Dendritic cell treated with granulocyte-macrophage colony-stimulating factor and Interleukin-4, amounts not matched to agents 40 ng/mL and 50 ng/mL, for 4 days (primary cell): ENCODE measurements at regions of chr14 and their contacts with region 1.

Region 1: DNA sequence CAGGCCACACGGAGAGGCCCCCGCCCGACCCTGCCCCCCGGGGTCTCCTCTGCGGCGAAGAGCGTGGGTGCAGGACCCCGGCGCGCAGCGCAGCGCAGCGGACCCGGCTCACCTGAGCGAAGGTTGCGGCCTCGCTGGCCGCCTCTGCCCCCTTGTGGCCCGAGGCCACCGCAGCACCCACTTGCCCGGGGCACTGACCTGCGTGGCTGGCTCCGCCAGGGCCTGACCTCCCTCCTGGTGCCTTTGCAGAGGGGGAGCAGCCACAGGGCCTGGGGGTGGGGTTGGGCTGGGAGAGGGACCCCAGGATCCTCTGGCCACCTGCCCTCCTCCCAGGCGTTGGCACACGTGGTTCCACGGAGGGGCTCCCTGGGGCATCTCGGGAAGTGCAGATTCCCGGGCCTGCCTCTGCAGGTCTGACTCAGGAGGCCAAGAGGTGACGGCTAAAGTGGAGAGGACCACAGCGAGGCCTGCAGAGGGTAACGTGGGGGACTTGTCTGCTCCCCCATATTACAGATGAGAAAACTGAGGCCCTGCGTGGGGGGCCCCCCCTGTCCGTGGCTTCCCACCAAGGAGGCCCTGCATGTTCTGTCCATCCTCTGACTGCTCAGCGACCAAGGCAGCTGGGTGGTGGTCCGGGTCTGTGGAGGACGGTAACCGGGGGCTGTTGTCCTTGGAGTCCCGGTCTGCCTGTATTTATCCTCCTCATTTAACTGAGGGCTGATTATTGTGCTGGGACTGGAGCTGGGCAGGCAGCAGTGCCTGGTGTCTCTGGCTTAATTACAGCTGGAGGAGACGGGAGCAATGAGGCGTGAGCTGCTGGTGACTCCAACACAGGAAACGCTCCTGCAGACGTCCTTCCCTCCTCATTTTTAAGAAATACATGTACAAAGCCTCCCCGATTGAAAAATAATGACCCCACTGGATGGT is 67.9 kb upstream of the BEGAIN start:
- H3K4me3 Mint-ChIP-seq: no peak overlapping the region
- H3K27ac Mint-ChIP-seq: no peak overlapping the region
- H3K4me1 Mint-ChIP-seq: no peaks in the 10 kb centered on the region
- H3K27me3 Mint-ChIP-seq: peaks cover 32% of the 10 kb centered on the region

Region 2: GRCh38 chr14:100285021-100285912 is 369.8 kb before region 1 on chr14:
- intact Hi-C with region 1: loop called (anchors 10 kb)
- H3K4me3 Mint-ChIP-seq: peak overlapping the region; percentile 77
- H3K27ac Mint-ChIP-seq: peak overlapping the region; percentile 77
- H3K4me1 Mint-ChIP-seq: peaks cover 21% of the 10 kb centered on the region
- H3K27me3 Mint-ChIP-seq: peaks cover 5% of the 10 kb centered on the region

Region 3: GRCh38 chr14:100383727-100384158 is 271.3 kb before region 1 on chr14:
- intact Hi-C with region 1: loop called (anchors 2 kb)
- H3K4me3 Mint-ChIP-seq: no peak overlapping the region
- H3K27ac Mint-ChIP-seq: peak overlapping the region; percentile 62
- H3K4me1 Mint-ChIP-seq: peaks cover 14% of the 10 kb centered on the region
- H3K27me3 Mint-ChIP-seq: no peaks in the 10 kb centered on the region

Region 4: GRCh38 chr14:100440187-100440631 is 214.9 kb before region 1 on chr14:
- intact Hi-C with region 1: loop called (anchors 2 kb)
- H3K4me3 Mint-ChIP-seq: no peak overlapping the region
- H3K27ac Mint-ChIP-seq: no peak overlapping the region
- H3K4me1 Mint-ChIP-seq: peaks cover 23% of the 10 kb centered on the region
- H3K27me3 Mint-ChIP-seq: no peaks in the 10 kb centered on the region

Region 5: DNA sequence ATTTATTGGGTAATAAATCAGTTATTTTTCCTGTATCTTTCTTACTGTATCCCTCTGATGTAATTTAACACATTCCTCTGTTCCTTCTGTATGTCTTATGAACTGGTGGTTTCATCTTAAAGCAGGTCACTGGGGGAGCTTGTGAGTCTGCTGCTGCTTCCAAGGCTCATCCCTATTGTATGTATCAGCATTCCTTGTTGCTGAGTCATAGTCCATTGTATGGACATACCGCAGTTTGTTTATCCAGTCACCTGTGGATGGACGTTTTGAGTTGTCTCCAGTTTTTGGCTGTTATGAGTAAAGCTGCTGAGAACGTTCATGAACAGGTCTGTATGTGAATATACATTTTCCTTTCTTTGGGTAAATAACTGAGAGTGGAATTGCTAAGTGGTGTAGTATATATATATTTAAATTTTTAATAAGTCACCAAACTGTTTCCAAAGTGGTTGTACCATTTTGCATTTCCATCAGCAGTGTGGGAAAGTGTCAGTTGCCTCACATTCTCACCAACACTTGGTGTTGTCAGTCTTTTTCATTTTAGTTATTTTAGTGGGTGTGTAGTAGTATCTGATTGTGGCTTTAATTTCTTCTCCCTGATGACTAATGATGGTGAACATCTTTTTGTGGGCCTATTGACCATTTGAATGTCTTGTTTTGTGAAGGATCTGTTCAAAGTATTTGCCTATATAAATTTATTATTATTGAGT is 150.6 kb before region 1 on chr14:
- intact Hi-C with region 1: no loop called
- H3K4me3 Mint-ChIP-seq: no peak overlapping the region
- H3K27ac Mint-ChIP-seq: no peak overlapping the region
- H3K4me1 Mint-ChIP-seq: peaks cover 3% of the 10 kb centered on the region
- H3K27me3 Mint-ChIP-seq: no peaks in the 10 kb centered on the region